GM13977 (cell line): ENCODE measurements at regions of chr11 and their contacts with region 1.

Region 1: DNA sequence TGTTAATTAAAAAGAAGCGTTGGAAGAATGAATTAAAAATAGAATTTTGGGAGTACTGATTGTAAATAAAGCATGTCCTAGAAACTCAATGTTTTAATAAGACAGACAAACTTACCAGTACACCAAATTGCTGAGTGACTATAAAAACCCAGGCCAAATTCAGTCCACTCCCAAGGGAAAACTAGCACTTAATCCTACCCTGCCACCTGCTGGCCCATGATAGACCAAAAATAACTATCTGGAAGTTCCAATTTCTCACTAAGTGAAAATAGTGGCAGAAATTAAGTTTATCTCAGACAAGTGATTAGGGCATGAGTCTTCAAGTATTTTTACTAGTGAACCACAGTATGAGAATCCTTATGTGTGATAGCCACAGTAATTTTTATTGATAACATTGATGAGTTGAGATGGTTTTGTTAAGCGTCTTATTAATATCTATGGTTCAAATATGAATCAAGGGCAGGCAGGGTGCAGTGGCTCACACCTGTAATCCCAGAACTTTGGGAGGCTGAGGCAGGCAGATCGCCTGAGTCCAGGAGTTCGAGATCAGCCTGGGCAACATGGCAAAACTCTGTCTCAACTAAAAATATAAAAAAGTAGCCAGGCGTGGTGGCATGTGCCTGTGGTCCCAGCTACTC is 9.8 kb upstream of the DDX10 start:
- DNase-seq: no peak
- CTCF ChIP-seq: peak; percentile 48

Region 2: GRCh38 chr11:108121274-108122155 is 533.6 kb before region 1 on chr11 and contains the start of gene ACAT1:
- in situ Hi-C with region 1: loop called (anchors 10 kb)
- DNase-seq: peak; percentile 92
- CTCF ChIP-seq: no peak

Region 3: GRCh38 chr11:108414958-108415357 is 240.2 kb before region 1 on chr11:
- in situ Hi-C with region 1: loop called (anchors 10 kb)
- DNase-seq: no peak
- CTCF ChIP-seq: no peak

Region 4: GRCh38 chr11:108807262-108807661 is 152.1 kb after region 1 on chr11:
- in situ Hi-C with region 1: no loop called
- DNase-seq: no peak
- CTCF ChIP-seq: no peak

Region 5: GRCh38 chr11:109166441-109166840 is 511.3 kb after region 1 on chr11:
- in situ Hi-C with region 1: no loop called
- DNase-seq: no peak
- CTCF ChIP-seq: no peak